CD14-positive monocyte (primary cell): ENCODE measurements at regions of chr11 and their contacts with region 1.

Region 1: GRCh38 chr11:129790106-129790505 is 25.5 kb upstream of the TMEM45B start:
- DNase-seq: no peak
- H3K4me3 ChIP-seq: no peak overlapping the region
- H3K4me3 Mint-ChIP-seq: peak overlapping the region in 1 of 2 donors; percentile 1
- H3K27ac ChIP-seq: peak overlapping the region in 1 of 2 donors; percentile 63
- H3K27ac Mint-ChIP-seq: peak overlapping the region in 4 of 7 donors; percentile 0 to 61 (median 24)
- H3K4me1 ChIP-seq: peaks cover 17 to 27% of the 10 kb centered on the region in 2 donors
- H3K4me1 Mint-ChIP-seq: peaks cover 34% of the 10 kb centered on the region
- H3K27me3 ChIP-seq: peaks cover 4 to 5% of the 10 kb centered on the region in 2 donors
- H3K27me3 Mint-ChIP-seq: peaks cover 0 to 6% (median 1%) of the 10 kb centered on the region in 3 donors
- CTCF ChIP-seq: no peak

Region 2: DNA sequence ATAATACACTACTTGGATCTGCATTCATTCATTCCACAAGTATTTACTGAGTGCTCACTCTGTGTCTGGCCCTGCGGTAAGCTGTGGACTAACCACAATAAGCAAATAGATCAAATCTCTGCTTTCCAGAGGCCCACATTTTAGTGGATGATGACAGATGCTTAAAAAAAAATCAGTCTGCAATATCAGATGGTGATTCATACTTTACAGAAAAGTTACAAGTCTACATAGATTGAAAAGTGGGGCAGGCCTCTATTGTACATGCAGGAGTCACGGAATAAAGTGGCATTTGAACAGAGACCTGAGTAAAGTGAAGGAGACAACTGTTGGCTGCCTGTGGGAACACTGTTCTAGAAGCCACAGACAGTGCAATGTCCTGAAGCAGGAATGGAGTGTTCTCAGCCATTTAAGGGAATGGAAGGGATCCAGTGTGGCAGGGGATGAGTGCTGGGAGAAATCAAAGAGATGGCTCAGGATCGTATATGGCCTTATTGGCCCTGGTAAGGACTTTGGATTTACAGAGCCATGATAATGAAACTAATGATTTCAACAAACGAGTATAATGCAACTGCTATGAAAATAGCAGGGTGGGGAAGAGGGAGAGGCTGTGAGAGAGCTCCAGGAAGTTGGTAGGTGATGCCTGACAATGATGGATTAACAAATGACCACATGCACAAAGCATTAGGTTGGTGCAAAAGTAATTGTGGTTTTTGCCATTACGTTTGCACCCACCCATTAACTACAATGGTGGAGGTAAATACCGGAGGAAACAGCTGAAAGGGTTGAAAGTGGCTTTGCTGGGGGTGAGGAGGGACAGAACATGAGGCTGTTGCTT is 56.6 kb after region 1 on chr11:
- intact Hi-C with region 1: loop called in 1 of 2 experiments (anchors 10 kb)
- DNase-seq: no peak
- H3K4me3 ChIP-seq: no peak overlapping the region
- H3K4me3 Mint-ChIP-seq: peak overlapping the region in 1 of 2 donors; percentile 32
- H3K27ac ChIP-seq: no peak overlapping the region
- H3K27ac Mint-ChIP-seq: peak overlapping the region in 1 of 7 donors; percentile 36
- H3K4me1 ChIP-seq: no peaks in the 10 kb centered on the region
- H3K4me1 Mint-ChIP-seq: peaks cover 10% of the 10 kb centered on the region
- H3K27me3 ChIP-seq: no peaks in the 10 kb centered on the region
- H3K27me3 Mint-ChIP-seq: peaks cover 2 to 7% (median 6%) of the 10 kb centered on the region in 3 donors
- CTCF ChIP-seq: no peak

Region 3: GRCh38 chr11:129861702-129862113 is 71.6 kb after region 1 on chr11:
- intact Hi-C with region 1: no loop called
- DNase-seq: no peak
- H3K4me3 ChIP-seq: no peak overlapping the region
- H3K4me3 Mint-ChIP-seq: no peak overlapping the region
- H3K27ac ChIP-seq: no peak overlapping the region
- H3K27ac Mint-ChIP-seq: no peak overlapping the region
- H3K4me1 ChIP-seq: no peaks in the 10 kb centered on the region
- H3K4me1 Mint-ChIP-seq: no peaks in the 10 kb centered on the region
- H3K27me3 ChIP-seq: no peaks in the 10 kb centered on the region
- H3K27me3 Mint-ChIP-seq: no peaks in the 10 kb centered on the region
- CTCF ChIP-seq: no peak